Mammary epithelial cell (primary cell): ENCODE measurements at regions of chr7 and their contacts with region 1.

Region 1: DNA sequence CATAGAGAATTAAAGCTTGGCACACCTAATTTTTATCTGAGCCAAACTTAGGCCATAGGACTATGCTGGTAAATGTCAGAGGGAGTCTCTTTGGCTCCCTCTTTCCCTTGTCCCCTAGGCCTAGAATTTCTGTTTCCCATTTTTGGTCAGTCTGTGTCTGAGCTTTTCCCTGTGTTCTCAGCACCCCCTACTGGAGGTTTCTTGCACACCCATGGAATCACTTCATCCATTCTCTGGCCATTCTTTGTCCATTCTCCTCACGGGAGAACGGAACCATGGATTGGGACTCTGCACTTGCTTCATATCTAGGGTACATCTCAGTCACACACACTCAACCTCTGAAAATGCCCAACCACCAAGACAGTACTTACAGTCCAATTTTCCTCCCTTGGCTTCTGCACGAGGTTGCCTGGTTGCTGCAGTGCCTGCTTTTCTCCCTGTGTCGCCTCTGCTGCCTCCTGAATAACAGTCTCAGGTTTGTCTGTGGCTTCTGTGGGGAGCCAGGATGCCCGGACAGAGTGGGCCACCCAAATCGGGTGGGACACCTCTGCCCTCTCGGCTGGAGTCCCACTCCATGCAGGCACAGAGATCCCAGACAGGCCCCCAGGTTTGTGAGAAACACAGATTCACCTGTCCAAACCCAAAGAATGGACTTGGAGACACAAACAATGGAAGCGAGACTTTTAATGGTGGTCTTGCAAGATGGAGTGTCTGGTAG is 35.1 kb upstream of the DNAH11 start:
- DNase-seq: peak; percentile 28
- H3K4me3 ChIP-seq: no peak overlapping the region
- H3K27ac ChIP-seq: no peak overlapping the region
- H3K4me1 ChIP-seq: no peaks in the 10 kb centered on the region
- H3K27me3 ChIP-seq: no peaks in the 10 kb centered on the region
- CTCF ChIP-seq: peak; percentile 68 to 86

Region 2: GRCh38 chr7:20778063-20778721 is 729.6 kb before region 1 on chr7:
- CTCF ChIA-PET with region 1: no interaction called
- dilution Hi-C with region 1: loop called (anchors 25 kb)
- in situ Hi-C with region 1: loop called (anchors 10 to 25 kb)
- intact Hi-C with region 1: loop called (anchors 1 kb)
- DNase-seq: peak; percentile 37
- H3K4me3 ChIP-seq: peak overlapping the region; percentile 52 to 77 (median 55)
- H3K27ac ChIP-seq: no peak overlapping the region
- H3K4me1 ChIP-seq: peaks cover 4% of the 10 kb centered on the region
- H3K27me3 ChIP-seq: peaks cover 17% of the 10 kb centered on the region
- CTCF ChIP-seq: peak; percentile 52 to 74

Region 3: GRCh38 chr7:20798081-20798693 is 709.6 kb before region 1 on chr7:
- CTCF ChIA-PET with region 1: no interaction called
- dilution Hi-C with region 1: loop called (anchors 25 kb)
- in situ Hi-C with region 1: loop called in 1 of 2 experiments (anchors 25 kb)
- intact Hi-C with region 1: no loop called
- DNase-seq: peak; percentile 59
- H3K4me3 ChIP-seq: peak overlapping the region; percentile 58 to 61 (median 59)
- H3K27ac ChIP-seq: no peak overlapping the region
- H3K4me1 ChIP-seq: peaks cover 6% of the 10 kb centered on the region
- H3K27me3 ChIP-seq: peaks cover under 1% of the 10 kb centered on the region
- CTCF ChIP-seq: no peak

Region 4: DNA sequence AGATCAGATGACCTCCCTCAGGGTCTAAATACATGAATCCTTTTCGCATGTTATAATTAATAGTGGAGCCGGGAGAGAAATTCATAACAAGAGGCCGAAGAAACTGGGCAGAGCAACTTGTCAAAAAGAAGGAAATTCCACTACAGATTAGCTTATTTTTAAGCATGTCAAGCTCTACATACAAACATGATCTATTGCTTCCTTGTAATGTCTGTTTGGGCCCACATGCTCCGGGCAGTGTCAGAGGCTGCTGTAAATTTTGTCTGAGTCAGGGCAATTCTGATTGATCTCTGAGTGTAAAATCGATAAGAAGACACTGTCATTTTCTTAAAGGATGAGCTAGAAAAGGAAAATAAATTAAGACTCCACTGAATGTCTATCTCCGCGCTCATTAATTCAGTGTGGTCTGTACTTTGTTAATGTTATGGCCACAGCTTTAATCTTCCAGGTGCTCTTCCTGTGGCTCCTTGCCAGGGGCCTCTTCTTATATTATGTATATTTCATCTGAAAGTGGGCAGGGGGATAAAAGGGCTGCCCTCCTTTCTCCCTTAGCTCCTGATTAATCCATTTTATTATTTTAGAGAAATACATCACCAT is 527.0 kb before region 1 on chr7:
- CTCF ChIA-PET with region 1: no interaction called
- dilution Hi-C with region 1: no loop called
- in situ Hi-C with region 1: loop called (anchors 10 to 25 kb)
- intact Hi-C with region 1: no loop called
- DNase-seq: no peak
- H3K4me3 ChIP-seq: no peak overlapping the region
- H3K27ac ChIP-seq: no peak overlapping the region
- H3K4me1 ChIP-seq: peaks cover 3% of the 10 kb centered on the region
- H3K27me3 ChIP-seq: no peaks in the 10 kb centered on the region
- CTCF ChIP-seq: no peak

Region 5: DNA sequence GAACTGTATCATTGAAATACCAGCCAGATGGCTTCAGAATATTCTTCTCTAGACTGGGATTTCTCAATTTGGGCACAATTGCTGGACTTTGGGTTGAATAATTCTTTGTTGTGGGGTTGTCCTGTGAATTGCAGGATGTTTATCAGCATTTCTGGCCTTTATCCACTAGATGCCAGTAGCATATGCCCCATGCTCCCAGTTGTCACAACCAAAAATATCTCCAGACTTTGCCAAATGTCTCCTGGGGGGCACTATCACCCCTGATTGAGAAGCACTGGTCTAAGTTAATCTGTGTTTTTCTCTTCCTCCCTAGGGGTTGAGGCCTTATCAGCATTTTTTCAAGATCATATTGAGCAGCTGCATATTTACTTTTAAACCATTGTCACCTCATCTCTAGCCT is 516.2 kb before region 1 on chr7:
- CTCF ChIA-PET with region 1: no interaction called
- dilution Hi-C with region 1: no loop called
- in situ Hi-C with region 1: loop called (anchors 10 to 25 kb)
- intact Hi-C with region 1: loop called (anchors 1 kb)
- DNase-seq: peak; percentile 9
- H3K4me3 ChIP-seq: no peak overlapping the region
- H3K27ac ChIP-seq: no peak overlapping the region
- H3K4me1 ChIP-seq: no peaks in the 10 kb centered on the region
- H3K27me3 ChIP-seq: no peaks in the 10 kb centered on the region
- CTCF ChIP-seq: peak; percentile 37 to 67

Region 6: DNA sequence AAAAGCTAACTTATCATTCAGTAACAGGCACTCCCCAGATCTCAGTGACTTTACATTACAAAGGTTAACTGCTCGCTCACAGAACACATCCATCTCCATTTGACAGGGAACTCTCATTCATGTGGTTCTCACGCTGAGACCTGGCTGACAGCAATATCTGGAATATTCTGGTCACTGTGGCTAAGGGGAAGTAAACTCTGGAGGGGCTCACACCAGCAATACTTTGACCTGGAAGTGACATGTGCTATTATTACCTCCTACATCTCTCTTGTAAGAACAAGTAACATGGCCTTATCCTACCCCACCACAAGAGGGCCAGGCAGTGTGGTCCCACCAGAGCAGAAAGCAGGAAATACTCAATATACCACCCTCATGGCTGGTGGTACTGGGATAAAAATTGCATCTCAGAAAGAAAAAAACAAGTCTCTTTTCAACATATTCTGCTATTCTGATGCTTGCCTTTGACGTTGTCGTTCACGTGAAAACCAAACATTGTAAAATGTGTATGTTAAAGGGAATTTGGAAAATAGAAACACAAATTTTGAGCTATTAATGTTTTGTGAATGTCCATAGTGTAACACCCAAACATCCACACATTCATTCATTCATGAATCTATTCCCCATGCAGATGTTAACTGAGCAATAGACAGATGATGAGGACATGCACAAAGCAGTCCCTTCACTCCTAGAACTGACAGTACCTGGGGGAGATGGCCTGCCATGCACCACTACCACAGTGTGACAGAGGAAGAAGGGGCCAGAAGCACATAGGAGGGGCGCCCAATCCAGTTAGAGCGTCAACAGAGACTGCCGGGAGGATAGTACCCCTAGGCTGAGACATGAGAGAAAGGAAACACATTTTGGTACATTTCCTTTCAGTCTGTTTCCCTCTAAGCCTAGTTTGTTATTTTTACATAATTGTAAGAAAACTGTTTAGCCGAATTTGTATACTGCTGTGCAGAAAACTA is 245.9 kb before region 1 on chr7:
- CTCF ChIA-PET with region 1: no interaction called
- dilution Hi-C with region 1: no loop called
- in situ Hi-C with region 1: loop called (anchors 5 kb)
- intact Hi-C with region 1: loop called (anchors 1 kb)
- DNase-seq: peak; percentile 14
- H3K4me3 ChIP-seq: no peak overlapping the region
- H3K27ac ChIP-seq: no peak overlapping the region
- H3K4me1 ChIP-seq: no peaks in the 10 kb centered on the region
- H3K27me3 ChIP-seq: peaks cover 2% of the 10 kb centered on the region
- CTCF ChIP-seq: peak; percentile 67 to 69

Region 7: GRCh38 chr7:21427182-21427870 is 80.5 kb before region 1 on chr7:
- CTCF ChIA-PET with region 1: no interaction called
- dilution Hi-C with region 1: no loop called
- in situ Hi-C with region 1: no loop called
- intact Hi-C with region 1: loop called (anchors 2 kb)
- DNase-seq: peak; percentile 99
- H3K4me3 ChIP-seq: peak overlapping the region; percentile 67 to 99 (median 69)
- H3K27ac ChIP-seq: peak overlapping the region; percentile 96
- H3K4me1 ChIP-seq: peaks cover 9% of the 10 kb centered on the region
- H3K27me3 ChIP-seq: no peaks in the 10 kb centered on the region
- CTCF ChIP-seq: no peak

Region 8: DNA sequence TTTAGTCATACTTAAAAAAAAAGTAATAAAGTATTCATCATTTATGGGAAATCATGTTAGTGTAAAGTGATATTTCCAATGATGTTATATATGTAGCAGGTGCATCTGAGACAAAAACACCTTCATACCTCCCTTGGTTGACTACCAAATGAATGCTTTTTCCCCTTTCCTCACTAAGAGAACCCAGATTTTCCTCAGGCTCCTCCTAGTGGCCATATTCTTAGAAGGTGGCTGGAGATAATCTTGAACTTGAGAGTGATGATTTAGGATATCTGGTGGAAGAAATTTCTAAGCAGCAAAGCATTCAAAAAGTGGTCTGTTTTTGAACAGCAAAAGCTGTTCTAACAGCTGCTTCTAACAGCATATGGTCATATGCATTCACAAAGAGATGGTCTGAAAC is 18.2 kb after region 1 on chr7:
- CTCF ChIA-PET with region 1: no interaction called
- dilution Hi-C with region 1: no loop called
- in situ Hi-C with region 1: no loop called
- intact Hi-C with region 1: no loop called
- DNase-seq: no peak
- H3K4me3 ChIP-seq: no peak overlapping the region
- H3K27ac ChIP-seq: no peak overlapping the region
- H3K4me1 ChIP-seq: no peaks in the 10 kb centered on the region
- H3K27me3 ChIP-seq: no peaks in the 10 kb centered on the region
- CTCF ChIP-seq: peak; percentile 24 to 51